ENCODE measurements at regions of chr22 and their contacts with region 1.

Region 1: GRCh38 chr22:37428649-37429586 is 1.6 kb upstream of the ELFN2 start:
- DNase-seq: peak; percentile 43
- ATAC-seq: no peak
- H3K4me3 ChIP-seq: no peak overlapping the region
- H3K27ac ChIP-seq: no peak overlapping the region
- H3K4me1 ChIP-seq: peaks cover 18% of the 10 kb centered on the region
- H3K27me3 ChIP-seq: no peaks in the 10 kb centered on the region
- CTCF ChIP-seq: peak; percentile 65
- POLR2A ChIP-seq: no peak
- RAD21 ChIP-seq: peak; percentile 67

Region 2: GRCh38 chr22:37316875-37317371 is 112.0 kb before region 1 on chr22:
- CTCF ChIA-PET with region 1: no interaction called
- POLR2A ChIA-PET with region 1: no interaction called
- dilution Hi-C with region 1: no loop called
- in situ Hi-C with region 1: no loop called
- intact Hi-C with region 1: loop called (anchors 1 kb)
- DNase-seq: peak; percentile 88
- ATAC-seq: peak; percentile 98
- H3K4me3 ChIP-seq: no peak overlapping the region
- H3K27ac ChIP-seq: no peak overlapping the region
- H3K4me1 ChIP-seq: peaks cover 17% of the 10 kb centered on the region
- H3K27me3 ChIP-seq: no peaks in the 10 kb centered on the region
- CTCF ChIP-seq: peak; percentile 98
- POLR2A ChIP-seq: peak; percentile 68
- RAD21 ChIP-seq: peak; percentile 100

Measured in IMR-90 (cell line).